PC-9 (cell line): ENCODE measurements at regions of chr3 and their contacts with region 1.

Region 1: GRCh38 chr3:12287727-12288191 is 1.1 kb upstream of the PPARG start:
- DNase-seq: peak in 1 of 2 experiments; percentile 54
- H3K4me3 ChIP-seq: peak overlapping the region; percentile 85
- H3K27ac ChIP-seq: peak overlapping the region; percentile 91
- H3K4me1 ChIP-seq: peaks cover 26% of the 10 kb centered on the region
- H3K27me3 ChIP-seq: no peaks in the 10 kb centered on the region
- CTCF ChIP-seq: no peak

Region 2: GRCh38 chr3:11211531-11212298 is 1076.0 kb before region 1 on chr3:
- CTCF ChIA-PET with region 1: no interaction called
- POLR2A ChIA-PET with region 1: no interaction called
- intact Hi-C with region 1: no loop called
- DNase-seq: no peak
- H3K4me3 ChIP-seq: no peak overlapping the region
- H3K27ac ChIP-seq: peak overlapping the region; percentile 41; the same call in 1 of the 2 replicates
- H3K4me1 ChIP-seq: peaks cover 35% of the 10 kb centered on the region
- H3K27me3 ChIP-seq: no peaks in the 10 kb centered on the region
- CTCF ChIP-seq: no peak

Region 3: GRCh38 chr3:12175844-12176453 is 111.8 kb before region 1 on chr3:
- CTCF ChIA-PET with region 1: no interaction called
- POLR2A ChIA-PET with region 1: interaction called, 3 read pairs
- intact Hi-C with region 1: loop called (anchors 5 kb)
- DNase-seq: peak in 1 of 2 experiments; percentile 47
- H3K4me3 ChIP-seq: no peak overlapping the region
- H3K27ac ChIP-seq: no peak overlapping the region
- H3K4me1 ChIP-seq: peaks cover 34% of the 10 kb centered on the region
- H3K27me3 ChIP-seq: no peaks in the 10 kb centered on the region
- CTCF ChIP-seq: peak; percentile 90

Region 4: GRCh38 chr3:12229903-12230302 is 57.9 kb before region 1 on chr3:
- CTCF ChIA-PET with region 1: no interaction called
- POLR2A ChIA-PET with region 1: interaction called, 4 read pairs
- intact Hi-C with region 1: loop called (anchors 5 kb)
- DNase-seq: peak in 1 of 2 experiments; percentile 64
- H3K4me3 ChIP-seq: no peak overlapping the region
- H3K27ac ChIP-seq: no peak overlapping the region
- H3K4me1 ChIP-seq: peaks cover 26% of the 10 kb centered on the region
- H3K27me3 ChIP-seq: no peaks in the 10 kb centered on the region
- CTCF ChIP-seq: no peak